Heart right ventricle (tissue), 16 donors: ENCODE measurements at regions of chr15 and their contacts with region 1.

Region 1: GRCh38 chr15:78108299-78109084 is 16.1 kb downstream of the SH2D7 start:
- DNase-seq: peak; percentile 83 to 85
- ATAC-seq: peak; percentile 81 to 92 (median 89)
- H3K4me3 ChIP-seq: no peak overlapping the region
- H3K27ac ChIP-seq: no peak overlapping the region
- H3K4me1 ChIP-seq: peaks cover 0 to 38% (median 0%) of the 10 kb centered on the region in 9 donors
- H3K27me3 ChIP-seq: no peaks in the 10 kb centered on the region
- CTCF ChIP-seq: peak; percentile 89 to 97 (median 95)

Region 2: GRCh38 chr15:77966540-77967290 is 141.8 kb before region 1 on chr15:
- intact Hi-C with region 1: loop called (anchors 1 to 5 kb)
- DNase-seq: peak in 1 of 2 donors; percentile 58
- ATAC-seq: peak; percentile 66 to 88 (median 80)
- H3K4me3 ChIP-seq: no peak overlapping the region
- H3K27ac ChIP-seq: no peak overlapping the region
- H3K4me1 ChIP-seq: peaks cover 0 to 7% (median 0%) of the 10 kb centered on the region in 9 donors
- H3K27me3 ChIP-seq: no peaks in the 10 kb centered on the region
- CTCF ChIP-seq: peak; percentile 75 to 91 (median 85)

Region 3: DNA sequence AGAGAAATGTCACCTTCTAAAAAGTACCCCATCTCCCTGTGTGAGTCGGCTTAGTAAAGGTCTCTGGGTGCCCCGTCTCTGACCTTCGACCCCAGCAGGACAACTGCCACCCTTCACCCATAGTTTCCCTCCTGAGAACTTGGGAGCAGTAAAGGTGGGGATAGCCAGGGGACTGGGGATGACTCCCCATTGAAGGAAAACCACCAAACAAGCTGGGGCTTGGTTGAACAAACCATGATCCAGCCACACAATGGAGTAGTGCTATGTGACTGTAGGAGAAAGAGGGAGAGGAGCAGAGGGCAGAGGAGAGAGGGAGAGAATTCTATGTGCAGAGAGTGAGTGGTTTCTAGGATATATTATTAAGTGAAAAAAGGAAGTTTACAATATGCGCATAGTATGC is 74.3 kb after region 1 on chr15:
- intact Hi-C with region 1: loop called in 1 of 10 experiments (anchors 5 kb)
- DNase-seq: no peak
- ATAC-seq: no peak
- H3K4me3 ChIP-seq: no peak overlapping the region
- H3K27ac ChIP-seq: no peak overlapping the region
- H3K4me1 ChIP-seq: no peaks in the 10 kb centered on the region
- H3K27me3 ChIP-seq: no peaks in the 10 kb centered on the region
- CTCF ChIP-seq: no peak

Region 4: GRCh38 chr15:78234515-78235040 is 126.1 kb after region 1 on chr15 and contains the start of gene ACSBG1:
- intact Hi-C with region 1: loop called in 1 of 10 experiments (anchors 5 kb)
- DNase-seq: no peak
- ATAC-seq: no peak
- H3K4me3 ChIP-seq: no peak within 1 kb of the TSS
- H3K27ac ChIP-seq: no peak within 1 kb of the TSS
- H3K4me1 ChIP-seq: no peaks in the 10 kb centered on the region
- H3K27me3 ChIP-seq: peaks cover 0 to 5% (median 0%) of the 10 kb centered on the region in 7 donors
- CTCF ChIP-seq: no peak
- total RNA-seq, gene ACSBG1: 0.22 to 0.30 TPM in 2 of 10 donors, not detected in the others

Region 5: DNA sequence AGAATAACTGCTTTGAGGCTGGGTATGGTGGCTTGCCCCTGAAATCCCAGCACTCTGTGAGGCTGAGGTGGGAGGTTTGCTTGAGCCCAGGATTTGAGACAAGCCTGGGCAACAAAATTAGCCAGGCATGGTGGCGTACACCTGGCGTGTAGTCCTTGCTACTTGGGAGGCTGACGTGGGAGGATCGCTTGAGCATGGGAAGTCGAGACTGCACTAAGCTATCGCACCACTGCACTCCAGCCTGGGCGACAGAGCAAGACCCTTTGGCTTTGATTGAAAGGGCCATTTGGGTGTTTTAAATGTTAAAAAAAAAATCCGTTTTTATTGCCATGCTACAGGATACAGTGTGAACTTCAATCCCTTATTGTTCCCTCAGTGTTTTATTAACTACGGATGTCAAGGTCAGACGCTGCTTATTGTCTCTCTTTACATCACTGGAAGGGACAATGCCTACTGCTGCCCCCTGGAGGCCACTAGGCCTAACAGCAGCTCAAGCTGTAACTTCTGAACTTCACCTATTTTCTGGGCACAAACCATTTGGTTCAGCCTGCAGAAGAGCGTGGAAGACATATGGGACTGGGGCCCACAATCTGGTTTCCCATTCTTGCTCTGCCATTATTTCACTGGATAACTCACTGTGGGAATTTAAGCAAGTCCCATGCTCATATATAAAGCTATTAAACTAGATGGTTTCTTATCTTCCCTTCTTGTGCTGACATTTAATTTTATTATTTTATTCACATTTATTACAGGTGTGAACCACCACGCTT is 314.3 kb after region 1 on chr15:
- intact Hi-C with region 1: loop called in 6 of 10 experiments (anchors 5 to 10 kb)
- DNase-seq: peak; percentile 52 to 62
- ATAC-seq: peak in 7 of 8 donors; percentile 47 to 81 (median 69)
- H3K4me3 ChIP-seq: no peak overlapping the region
- H3K27ac ChIP-seq: no peak overlapping the region
- H3K4me1 ChIP-seq: peaks cover 0 to 11% (median 0%) of the 10 kb centered on the region in 9 donors
- H3K27me3 ChIP-seq: peaks cover 0 to 8% (median 0%) of the 10 kb centered on the region in 7 donors
- CTCF ChIP-seq: peak; percentile 81 to 96 (median 94)